A549 (cell line): ENCODE measurements at regions of chr1 and their contacts with region 1.

Region 1: GRCh38 chr1:24744911-24745710 is at the start of gene CLIC4:
- DNase-seq: peak; percentile 75 to 98
- ATAC-seq: peak; percentile 91 to 96
- H3K4me3 ChIP-seq: peak within 1 kb of the TSS; percentile 63
- H3K27ac ChIP-seq: peak within 1 kb of the TSS; percentile 88 to 96
- H3K4me1 ChIP-seq: peaks cover 16% of the 10 kb centered on the region; the same call in 2 of the 3 replicates
- CTCF ChIP-seq: no peak
- EP300 ChIP-seq: no peak
- POLR2A ChIP-seq: peak; percentile 94
- RAD21 ChIP-seq: peak in 1 of 2 experiments; percentile 15; a peak in 2 of 5 replicates
- polyA plus RNA-seq, gene CLIC4: 85.4 and 97.4 TPM in 2 replicates

Region 2: DNA sequence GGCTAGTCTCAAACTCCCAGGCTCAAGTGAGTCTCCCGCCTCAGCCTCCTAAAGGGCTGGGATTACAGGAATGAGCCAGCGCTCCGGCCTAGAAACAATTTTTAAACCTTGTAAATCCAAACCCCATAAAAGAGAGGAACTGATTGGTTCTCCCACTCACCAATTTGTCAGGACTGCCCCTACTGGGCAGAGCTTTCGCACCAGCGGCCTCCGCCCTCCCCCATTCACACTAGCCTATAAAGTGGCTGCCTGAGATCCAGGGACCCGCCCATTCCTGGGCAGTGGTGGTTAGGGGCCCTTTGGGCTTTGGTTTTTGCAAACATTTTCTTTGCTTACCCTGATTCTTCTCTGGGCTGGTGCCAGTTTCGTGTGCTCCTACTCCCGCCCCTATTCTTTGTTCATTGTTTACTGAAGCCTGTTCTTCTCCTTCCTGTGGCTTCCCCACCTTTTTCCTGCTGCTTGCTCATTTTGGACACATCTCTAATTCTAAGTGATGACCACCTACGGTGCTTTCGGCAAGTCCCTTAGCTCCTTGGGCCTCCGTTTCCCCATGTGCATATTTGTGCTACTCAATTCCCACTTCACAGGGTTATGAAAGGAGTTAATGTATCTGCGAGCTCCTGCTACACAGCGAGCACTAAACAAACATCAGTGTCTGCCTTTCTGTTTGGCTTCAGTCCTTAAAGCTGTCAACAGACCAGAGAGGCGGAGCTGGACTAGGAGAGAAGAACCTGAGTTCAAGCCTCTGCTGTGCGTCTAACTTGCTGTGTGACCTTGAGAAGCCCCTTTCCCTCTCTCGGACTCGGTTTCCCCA is 39.6 kb before region 1 on chr1:
- CTCF ChIA-PET with region 1: interaction called, 3 read pairs
- POLR2A ChIA-PET with region 1: interaction called, 11 read pairs
- DNase-seq: peak; percentile 91 to 95
- ATAC-seq: peak; percentile 98 to 99
- H3K4me3 ChIP-seq: peak overlapping the region; percentile 33
- H3K27ac ChIP-seq: peak overlapping the region; percentile 67 to 89
- H3K4me1 ChIP-seq: peaks cover 18% of the 10 kb centered on the region
- CTCF ChIP-seq: no peak
- EP300 ChIP-seq: no peak
- POLR2A ChIP-seq: no peak
- RAD21 ChIP-seq: no peak

Region 3: GRCh38 chr1:24732186-24732885 is 12.8 kb before region 1 on chr1:
- CTCF ChIA-PET with region 1: interaction called, 10 read pairs
- POLR2A ChIA-PET with region 1: interaction called, 3 read pairs
- DNase-seq: no peak
- ATAC-seq: no peak
- H3K4me3 ChIP-seq: no peak overlapping the region
- H3K27ac ChIP-seq: no peak overlapping the region
- H3K4me1 ChIP-seq: peaks cover 19% of the 10 kb centered on the region; the same call in 2 of the 3 replicates
- CTCF ChIP-seq: no peak
- EP300 ChIP-seq: no peak
- POLR2A ChIP-seq: no peak
- RAD21 ChIP-seq: no peak

Region 4: DNA sequence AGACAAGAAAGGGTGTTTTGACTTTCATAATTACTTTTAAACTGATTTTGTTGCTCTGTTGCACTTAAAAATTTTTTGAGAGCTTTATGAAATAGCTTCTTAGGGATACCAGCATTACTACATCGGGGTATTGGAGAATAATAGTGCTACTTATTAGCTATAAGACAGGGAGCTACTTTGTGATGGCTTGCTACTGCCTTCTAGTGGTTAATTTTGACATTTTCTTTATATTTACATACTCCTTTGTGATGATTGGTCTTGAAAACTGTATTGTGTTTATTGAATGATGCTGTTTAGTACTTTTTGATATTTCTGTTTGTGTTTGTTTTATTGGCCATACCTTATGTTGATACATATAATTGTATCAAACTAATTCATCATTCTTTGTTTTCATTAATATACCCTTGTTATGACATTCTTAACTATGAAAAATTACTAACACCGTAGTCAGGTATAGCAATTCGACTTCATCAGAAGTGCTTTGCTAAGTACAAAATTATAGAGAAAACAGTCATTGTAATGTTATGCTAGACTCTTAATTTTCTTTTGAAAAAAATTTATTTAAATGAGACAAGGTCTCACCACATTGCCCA is 85.7 kb after region 1 on chr1:
- CTCF ChIA-PET with region 1: interaction called, 10 read pairs
- POLR2A ChIA-PET with region 1: interaction called, 11 read pairs
- DNase-seq: peak; percentile 34 to 68
- ATAC-seq: peak; percentile 74 to 83
- H3K4me3 ChIP-seq: no peak overlapping the region
- H3K27ac ChIP-seq: no peak overlapping the region
- H3K4me1 ChIP-seq: peaks cover 28% of the 10 kb centered on the region
- CTCF ChIP-seq: peak; percentile 89
- EP300 ChIP-seq: no peak
- POLR2A ChIP-seq: no peak
- RAD21 ChIP-seq: peak; percentile 85 to 88